Vagina (tissue), 2 donors: ENCODE measurements at regions of chr12 and their contacts with region 1.

Region 1: GRCh38 chr12:121894633-121895032 is 6.0 kb downstream of the PSMD9 start:
- DNase-seq: no peak
- H3K4me3 ChIP-seq: no peak overlapping the region
- H3K27ac ChIP-seq: peak overlapping the region; percentile 62
- H3K4me1 ChIP-seq: peaks cover 33% of the 10 kb centered on the region
- H3K27me3 ChIP-seq: no peaks in the 10 kb centered on the region
- CTCF ChIP-seq: no peak
- POLR2A ChIP-seq: no peak

Region 2: DNA sequence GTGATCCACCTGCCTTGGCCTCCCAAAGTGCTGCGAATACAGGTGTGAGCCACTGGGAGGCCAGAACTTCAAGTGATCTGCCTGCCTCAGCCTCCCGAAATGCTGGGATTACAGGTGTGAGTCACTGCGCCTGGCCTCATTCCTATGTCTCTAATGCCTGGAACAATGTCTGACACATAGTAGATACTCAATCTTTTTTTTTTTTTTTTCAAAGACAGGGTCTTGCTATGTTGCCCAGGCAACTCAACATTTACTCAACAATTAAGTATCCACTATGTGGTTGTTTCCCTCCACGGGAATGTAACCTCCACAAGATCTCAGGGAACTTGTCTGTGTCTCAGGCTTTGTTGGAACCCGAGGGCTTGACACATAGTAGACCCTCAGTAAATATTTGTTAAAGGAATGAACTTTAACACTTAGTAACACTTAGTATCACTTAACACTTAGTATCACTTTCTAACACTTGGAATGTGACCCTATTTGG is 185.1 kb before region 1 on chr12:
- intact Hi-C with region 1: loop called (anchors 5 kb)
- DNase-seq: no peak
- H3K4me3 ChIP-seq: no peak overlapping the region
- H3K27ac ChIP-seq: no peak overlapping the region
- H3K4me1 ChIP-seq: peaks cover 27% of the 10 kb centered on the region
- H3K27me3 ChIP-seq: no peaks in the 10 kb centered on the region
- CTCF ChIP-seq: no peak
- POLR2A ChIP-seq: no peak

Region 3: GRCh38 chr12:121964813-121965643 is 70.4 kb after region 1 on chr12:
- intact Hi-C with region 1: no loop called
- DNase-seq: no peak
- H3K4me3 ChIP-seq: no peak overlapping the region
- H3K27ac ChIP-seq: no peak overlapping the region
- H3K4me1 ChIP-seq: peaks cover 6% of the 10 kb centered on the region
- H3K27me3 ChIP-seq: no peaks in the 10 kb centered on the region
- CTCF ChIP-seq: no peak
- POLR2A ChIP-seq: no peak